GM18951 (cell line): ENCODE measurements at regions of chr1 and their contacts with region 1.

Region 1: DNA sequence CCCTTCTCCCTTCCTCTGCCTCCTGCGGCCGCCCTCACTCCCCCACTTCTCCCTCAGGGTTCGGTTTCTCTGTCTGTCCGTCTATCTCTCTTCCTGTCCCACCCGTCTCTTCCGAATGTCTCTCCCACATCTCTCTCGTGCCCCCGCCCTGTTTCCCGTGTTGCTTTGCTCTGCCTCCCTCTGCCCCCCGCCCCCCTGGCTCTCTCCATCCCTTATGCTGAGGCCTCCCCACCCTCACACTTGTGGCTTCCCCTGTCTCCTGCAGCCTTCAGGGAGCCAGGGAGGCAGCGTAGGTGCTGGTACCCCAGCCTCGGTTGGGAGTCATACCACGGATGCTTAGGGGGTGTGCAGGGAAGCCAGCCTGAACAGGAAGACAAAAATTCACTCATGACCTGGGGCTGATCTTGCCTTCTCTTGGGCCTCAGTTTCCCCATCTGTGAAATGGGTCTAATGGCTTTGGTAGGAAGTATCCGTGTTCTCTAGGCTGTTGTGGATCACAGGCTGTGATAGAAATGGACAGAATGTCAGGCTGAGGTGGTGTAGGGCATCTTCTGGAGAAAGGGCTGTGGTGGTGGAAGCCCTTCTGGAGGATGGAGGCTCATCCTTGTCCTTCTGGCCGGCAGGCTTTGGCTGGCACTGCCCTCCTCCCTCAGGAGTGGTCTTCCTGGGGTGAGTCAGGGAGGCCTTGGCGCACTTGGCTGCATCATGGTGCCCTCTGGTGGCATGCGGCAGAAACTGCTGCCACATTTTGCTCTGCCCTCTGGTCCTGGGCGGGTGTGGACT is 55.5 kb downstream of the FOXO6 start:
- POLR2A ChIP-seq: no peak

Region 2: GRCh38 chr1:41282679-41283317 is 133.9 kb before region 1 on chr1:
- in situ Hi-C with region 1: loop called (anchors 10 kb)
- POLR2A ChIP-seq: no peak